Psoas muscle (tissue), 8 donors: ENCODE measurements at regions of chr10 and their contacts with region 1.

Region 1: GRCh38 chr10:5071411-5072198 is 22.6 kb upstream of the AKR1C3 start:
- DNase-seq: peak in 1 of 2 donors; percentile 36
- ATAC-seq: peak; percentile 83 to 89 (median 86)
- H3K4me3 ChIP-seq: peak overlapping the region; percentile 37
- H3K27ac ChIP-seq: peak overlapping the region; percentile 81
- H3K4me1 ChIP-seq: peaks cover 17% of the 10 kb centered on the region
- H3K27me3 ChIP-seq: no peaks in the 10 kb centered on the region
- CTCF ChIP-seq: no peak

Region 2: DNA sequence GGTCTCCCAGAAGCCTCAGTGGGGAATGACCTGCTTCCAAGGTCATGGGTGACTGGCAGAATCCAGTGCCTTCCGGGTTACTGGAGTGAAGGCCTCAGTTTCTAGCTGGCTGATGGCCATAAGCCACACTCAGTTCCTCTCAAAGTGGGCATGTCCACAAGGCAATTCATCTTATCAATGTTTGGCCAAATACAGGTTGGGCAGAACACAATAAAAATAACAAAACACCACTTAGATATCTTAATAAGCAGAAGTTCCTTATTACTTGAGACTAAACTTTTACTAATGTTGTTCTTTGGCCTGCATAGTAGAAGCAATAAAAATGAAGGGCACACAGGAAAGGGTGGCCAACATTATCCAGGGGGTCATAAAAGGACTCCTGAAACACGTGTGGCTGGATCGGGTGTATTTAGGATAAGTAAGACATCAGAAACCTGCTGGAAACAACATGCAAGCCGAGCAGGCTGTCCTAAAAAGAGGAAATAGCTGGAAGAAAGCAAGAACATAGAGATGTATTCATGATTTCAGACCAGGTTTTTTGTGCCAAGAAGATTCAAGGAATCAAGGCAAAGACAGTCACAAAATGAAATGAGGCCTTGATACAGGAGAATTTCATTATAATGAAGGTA is 48.3 kb before region 1 on chr10:
- intact Hi-C with region 1: loop called in 1 of 2 experiments (anchors 5 kb)
- DNase-seq: no peak
- ATAC-seq: no peak
- H3K4me3 ChIP-seq: no peak overlapping the region
- H3K27ac ChIP-seq: no peak overlapping the region
- H3K4me1 ChIP-seq: peaks cover 30% of the 10 kb centered on the region
- H3K27me3 ChIP-seq: no peaks in the 10 kb centered on the region
- CTCF ChIP-seq: no peak